B cell (primary cell): ENCODE measurements at regions of chr12 and their contacts with region 1.

Region 1: DNA sequence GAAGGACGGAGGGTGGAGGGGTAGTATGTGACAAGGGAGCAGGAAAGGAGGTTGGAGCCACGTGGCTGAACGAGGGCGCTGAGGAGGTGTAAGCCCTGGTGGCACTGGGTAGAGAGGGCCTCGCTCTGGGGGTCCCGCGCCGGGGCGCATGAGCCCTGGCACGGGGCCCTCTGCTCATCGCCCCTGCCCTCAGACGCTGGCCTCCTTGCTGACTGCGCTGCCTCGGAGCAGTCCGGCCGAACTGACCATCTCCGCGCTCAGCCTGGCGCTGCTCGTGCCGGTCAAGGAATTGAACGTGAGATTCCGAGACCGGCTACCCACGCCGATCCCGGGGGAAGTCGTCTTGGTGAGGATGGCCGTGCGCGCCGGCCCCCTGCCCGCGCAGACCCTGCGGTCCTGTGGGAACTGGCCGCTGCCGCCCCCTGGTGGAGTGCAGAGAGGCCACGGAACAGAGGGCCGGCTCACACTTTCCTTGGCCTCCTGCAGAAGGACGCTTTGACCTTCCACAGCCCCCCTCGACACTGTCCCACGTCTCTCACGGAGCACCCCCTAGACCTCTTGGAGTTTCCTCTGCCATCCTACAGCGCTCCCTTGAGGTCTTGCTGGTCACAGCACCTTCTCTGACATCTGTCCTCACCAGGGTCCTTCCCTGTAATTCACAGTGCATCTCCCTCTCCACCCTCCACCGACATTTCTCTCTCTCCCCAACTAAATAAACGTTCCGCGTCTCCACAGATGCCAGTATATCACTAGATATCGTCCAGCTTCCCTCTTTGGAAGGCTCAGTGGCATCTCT is 10.5 kb downstream of the ARHGEF25 start:
- DNase-seq: peak; percentile 76
- ATAC-seq: peak; percentile 78
- H3K4me3 ChIP-seq: peak overlapping the region; percentile 13 to 51 (median 47)
- H3K4me3 Mint-ChIP-seq: peak overlapping the region; percentile 85
- H3K27ac ChIP-seq: no peak overlapping the region
- H3K27ac Mint-ChIP-seq: no peak overlapping the region
- H3K4me1 ChIP-seq: peaks cover 32 to 48% of the 10 kb centered on the region in 2 donors
- H3K4me1 Mint-ChIP-seq: peaks cover 37% of the 10 kb centered on the region
- H3K27me3 ChIP-seq: peaks cover 0 to 92% (median 69%) of the 10 kb centered on the region in 4 experiments
- H3K27me3 Mint-ChIP-seq: peaks cover 88% of the 10 kb centered on the region
- CTCF ChIP-seq: peak; percentile 97

Region 2: DNA sequence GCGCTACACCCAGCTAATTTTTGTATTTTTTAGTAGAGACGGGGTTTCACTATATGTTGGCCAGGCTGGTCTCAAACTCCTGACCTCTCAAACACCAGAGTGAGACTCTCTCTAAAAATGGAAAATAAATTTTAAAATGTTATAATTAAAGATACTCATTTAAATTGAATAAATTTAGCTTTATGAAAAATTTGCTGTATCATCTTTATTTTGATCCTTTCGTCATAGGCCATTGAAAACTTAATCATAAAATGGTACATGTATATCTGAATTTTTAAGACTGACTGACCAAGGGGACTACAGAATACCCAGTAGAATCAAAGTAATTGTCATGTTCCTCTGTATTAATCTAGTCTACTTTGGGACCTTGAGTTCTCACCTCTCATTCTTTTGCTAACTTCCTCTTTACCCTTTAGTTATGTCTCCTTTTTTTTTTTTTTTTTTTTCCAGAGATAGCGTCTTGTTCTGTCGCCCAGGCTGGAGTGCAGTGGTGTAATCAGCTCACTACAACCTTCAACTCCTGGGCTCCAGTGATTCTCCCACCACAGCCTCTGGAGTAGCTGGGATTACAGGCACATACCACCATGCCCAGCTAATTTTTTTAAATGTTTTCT is 1638.4 kb before region 1 on chr12:
- CTCF ChIA-PET with region 1: no interaction called
- POLR2A ChIA-PET with region 1: no interaction called
- intact Hi-C with region 1: no loop called
- DNase-seq: peak; percentile 44
- ATAC-seq: peak; percentile 51
- H3K4me3 ChIP-seq: no peak overlapping the region
- H3K4me3 Mint-ChIP-seq: peak overlapping the region; percentile 61
- H3K27ac ChIP-seq: peak overlapping the region in 1 of 2 donors; percentile 60
- H3K27ac Mint-ChIP-seq: peak overlapping the region; percentile 75
- H3K4me1 ChIP-seq: peaks cover 23% of the 10 kb centered on the region in 2 donors
- H3K4me1 Mint-ChIP-seq: peaks cover 22% of the 10 kb centered on the region
- H3K27me3 ChIP-seq: no peaks in the 10 kb centered on the region
- H3K27me3 Mint-ChIP-seq: no peaks in the 10 kb centered on the region
- CTCF ChIP-seq: no peak

Region 3: DNA sequence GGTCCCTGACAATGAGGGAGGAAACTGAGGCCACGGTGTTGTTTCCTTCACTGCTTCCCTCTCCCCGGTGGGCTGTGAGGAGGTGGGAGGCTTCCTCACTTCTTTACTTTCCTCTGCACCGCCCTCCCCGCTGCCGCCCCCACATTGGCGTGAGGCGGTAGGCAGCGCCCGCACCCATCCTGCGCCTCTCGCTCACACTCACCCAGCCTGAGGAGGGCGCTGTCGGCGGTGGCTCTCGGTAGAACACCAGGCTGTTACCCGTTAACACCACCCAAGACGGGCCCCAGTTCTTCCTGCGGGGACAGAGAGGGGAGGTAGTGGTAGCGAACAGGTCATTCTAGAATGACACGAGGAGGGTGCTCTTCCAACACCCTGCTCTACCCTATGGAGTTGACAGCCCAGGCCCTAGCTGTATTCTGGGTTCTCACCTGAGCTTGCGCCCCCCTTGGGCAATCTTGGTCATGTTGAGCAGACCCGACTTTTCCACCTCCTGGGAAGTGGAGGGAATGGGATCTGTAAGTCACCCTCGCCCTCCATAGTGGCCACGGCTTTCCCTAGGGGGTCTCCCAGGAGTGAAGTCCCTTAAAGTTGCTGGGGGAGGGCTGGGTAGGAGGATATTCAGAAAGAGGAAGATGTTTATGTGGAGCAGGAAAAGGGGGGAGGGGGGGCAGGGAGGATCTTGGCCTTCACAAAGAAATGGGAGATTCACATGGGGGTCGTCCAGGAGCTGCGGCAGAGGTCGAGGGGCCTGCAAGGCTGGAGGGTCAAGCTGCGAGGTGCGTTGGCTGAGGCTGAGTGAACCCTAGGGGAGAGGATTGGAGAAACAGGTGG is 145.3 kb before region 1 on chr12:
- CTCF ChIA-PET with region 1: interaction called, 3 read pairs
- POLR2A ChIA-PET with region 1: no interaction called
- intact Hi-C with region 1: loop called (anchors 5 kb)
- DNase-seq: peak; percentile 65
- ATAC-seq: peak; percentile 25
- H3K4me3 ChIP-seq: peak overlapping the region; percentile 78 to 94 (median 85)
- H3K4me3 Mint-ChIP-seq: peak overlapping the region; percentile 99
- H3K27ac ChIP-seq: peak overlapping the region; percentile 91 to 99
- H3K27ac Mint-ChIP-seq: peak overlapping the region; percentile 98
- H3K4me1 ChIP-seq: peaks cover 63 to 84% of the 10 kb centered on the region in 2 donors
- H3K4me1 Mint-ChIP-seq: peaks cover 81% of the 10 kb centered on the region
- H3K27me3 ChIP-seq: no peaks in the 10 kb centered on the region
- H3K27me3 Mint-ChIP-seq: no peaks in the 10 kb centered on the region
- CTCF ChIP-seq: peak; percentile 87

Region 4: GRCh38 chr12:57604992-57605810 is 16.5 kb before region 1 on chr12:
- CTCF ChIA-PET with region 1: interaction called, 14 read pairs
- POLR2A ChIA-PET with region 1: no interaction called
- intact Hi-C with region 1: no loop called
- DNase-seq: no peak
- ATAC-seq: peak; percentile 23
- H3K4me3 ChIP-seq: peak overlapping the region in 4 of 5 experiments; percentile 38 to 62 (median 52)
- H3K4me3 Mint-ChIP-seq: peak overlapping the region; percentile 82
- H3K27ac ChIP-seq: no peak overlapping the region
- H3K27ac Mint-ChIP-seq: no peak overlapping the region
- H3K4me1 ChIP-seq: peaks cover 13 to 14% of the 10 kb centered on the region in 2 donors
- H3K4me1 Mint-ChIP-seq: peaks cover 22% of the 10 kb centered on the region
- H3K27me3 ChIP-seq: peaks cover 0 to 46% (median 15%) of the 10 kb centered on the region in 4 experiments
- H3K27me3 Mint-ChIP-seq: peaks cover 34% of the 10 kb centered on the region
- CTCF ChIP-seq: no peak